Ovary (tissue), 10 donors: ENCODE measurements at regions of chr12 and their contacts with region 1.

Region 1: GRCh38 chr12:53999559-54000104 is 329 bp upstream of the HOXC9 start:
- DNase-seq: peak in 4 of 5 donors; percentile 66 to 76 (median 70)
- H3K4me3 ChIP-seq: peak overlapping the region; percentile 48
- H3K27ac ChIP-seq: peak overlapping the region in 1 of 2 donors; percentile 73
- H3K4me1 ChIP-seq: peaks cover 4% of the 10 kb centered on the region
- H3K27me3 ChIP-seq: no peaks in the 10 kb centered on the region
- CTCF ChIP-seq: no peak
- EP300 ChIP-seq: no peak
- POLR2A ChIP-seq: no peak

Region 2: DNA sequence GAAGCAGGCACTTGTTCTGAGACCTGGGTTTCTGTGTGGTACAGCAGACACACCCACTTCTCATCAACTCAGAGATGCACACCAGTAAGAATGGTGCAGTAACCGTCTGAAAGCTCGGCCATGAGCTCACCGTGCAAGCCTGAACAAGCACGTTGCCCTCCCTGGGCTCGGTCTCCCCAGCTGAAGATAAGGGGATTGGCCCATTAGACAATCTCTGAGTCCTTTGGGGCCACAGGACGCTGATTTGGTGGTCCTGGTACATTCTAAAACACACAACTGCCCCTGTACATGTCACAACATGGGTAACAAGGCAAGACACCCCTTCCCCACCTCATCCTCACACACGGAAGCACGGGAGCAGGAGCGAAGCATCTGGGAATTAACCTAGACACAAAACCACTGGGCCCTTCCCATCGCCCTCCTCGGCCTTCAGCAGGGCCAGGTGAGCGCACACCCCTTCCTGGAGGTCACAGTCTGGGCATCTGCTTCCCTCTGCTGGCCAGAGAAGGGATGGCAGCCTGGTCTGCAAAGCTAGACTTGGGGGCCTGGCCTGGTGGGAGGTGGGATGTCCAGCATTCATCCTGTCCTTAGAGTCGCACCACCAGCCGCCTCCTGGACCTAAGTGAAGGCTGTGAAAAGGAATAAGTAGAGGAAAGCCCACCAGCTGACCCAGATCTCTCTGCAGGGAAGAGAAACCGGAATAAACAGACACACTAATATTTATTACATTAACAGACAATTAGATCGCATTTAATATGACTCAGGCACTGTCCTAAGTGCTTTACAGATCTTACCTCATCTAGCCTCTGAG is 208.1 kb after region 1 on chr12:
- intact Hi-C with region 1: loop called in 1 of 4 experiments (anchors 5 kb)
- DNase-seq: peak; percentile 70 to 86 (median 84)
- H3K4me3 ChIP-seq: no peak overlapping the region
- H3K27ac ChIP-seq: no peak overlapping the region
- H3K4me1 ChIP-seq: no peaks in the 10 kb centered on the region
- H3K27me3 ChIP-seq: no peaks in the 10 kb centered on the region
- CTCF ChIP-seq: peak; percentile 88 to 94 (median 89)
- EP300 ChIP-seq: no peak
- POLR2A ChIP-seq: no peak